Colonic mucosa (tissue), 4 donors: ENCODE measurements at regions of chr12 and their contacts with region 1.

Region 1: DNA sequence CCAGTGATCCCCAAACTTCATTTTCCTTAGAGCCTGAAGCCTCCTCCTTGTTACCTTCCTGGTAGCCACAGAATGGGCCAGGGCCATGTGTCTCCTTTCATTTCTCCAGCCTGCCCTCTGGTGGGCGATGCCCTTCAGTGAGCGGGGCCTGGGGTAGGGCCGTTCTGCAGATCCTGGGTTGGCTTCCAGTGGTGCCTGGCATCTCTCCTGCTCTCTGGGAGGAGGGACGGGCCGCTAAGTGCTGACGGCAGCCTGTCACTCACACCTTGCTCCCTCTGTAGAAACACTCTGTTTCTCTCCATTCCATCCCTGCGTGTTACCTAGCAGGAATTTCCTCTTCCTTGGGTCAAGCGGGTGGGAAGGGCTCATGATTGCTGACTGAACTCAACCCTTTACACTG is 232.1 kb downstream of the CACNA1C start:
- DNase-seq: peak; percentile 79
- H3K4me3 ChIP-seq: no peak overlapping the region
- H3K27ac ChIP-seq: no peak overlapping the region
- H3K4me1 ChIP-seq: no peaks in the 10 kb centered on the region
- H3K27me3 ChIP-seq: no peaks in the 10 kb centered on the region
- CTCF ChIP-seq: peak; percentile 57

Region 2: DNA sequence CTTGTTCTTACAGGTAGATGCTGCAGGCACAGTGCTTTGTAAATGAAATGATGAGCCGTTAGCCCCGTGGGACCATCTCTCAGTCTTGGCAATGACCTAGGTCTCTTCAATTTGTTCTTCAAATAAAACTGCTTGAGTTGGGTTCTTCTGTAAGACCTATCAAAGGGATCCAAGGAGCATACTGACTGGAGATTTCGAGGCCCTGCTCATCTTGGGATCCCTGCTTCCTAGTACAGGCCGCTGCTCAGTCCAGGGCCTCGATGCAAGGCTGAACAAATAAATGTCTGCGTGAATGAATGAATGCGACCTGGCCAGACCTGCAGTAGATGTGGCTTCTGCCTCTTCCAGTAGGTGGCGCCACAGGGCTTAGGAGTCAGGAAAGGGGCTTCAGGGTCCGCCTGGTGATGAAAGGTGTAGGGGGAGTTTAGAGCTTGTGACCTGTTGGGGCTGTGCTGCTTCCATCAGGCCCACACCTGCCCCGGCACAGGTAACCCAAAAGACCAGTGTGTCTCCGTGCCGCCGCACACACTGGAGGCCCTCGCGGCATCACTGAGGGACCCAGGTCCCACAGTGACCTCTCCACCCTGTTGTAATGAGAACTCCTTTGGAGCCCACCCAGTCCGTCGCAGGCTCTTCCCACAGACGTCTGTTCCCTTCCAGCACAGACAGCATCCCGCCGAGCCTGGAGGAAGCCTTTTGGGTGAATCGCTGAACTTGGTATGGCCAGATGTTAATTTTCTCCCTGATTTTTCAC is 227.6 kb before region 1 on chr12:
- intact Hi-C with region 1: loop called (anchors 2 kb)
- DNase-seq: peak; percentile 68
- H3K4me3 ChIP-seq: no peak overlapping the region
- H3K27ac ChIP-seq: no peak overlapping the region
- H3K4me1 ChIP-seq: no peaks in the 10 kb centered on the region
- H3K27me3 ChIP-seq: peaks cover 24% of the 10 kb centered on the region
- CTCF ChIP-seq: peak; percentile 80

Region 3: GRCh38 chr12:2583091-2583497 is 298.2 kb after region 1 on chr12:
- intact Hi-C with region 1: loop called (anchors 10 kb)
- DNase-seq: peak; percentile 75
- H3K4me3 ChIP-seq: no peak overlapping the region
- H3K27ac ChIP-seq: no peak overlapping the region
- H3K4me1 ChIP-seq: no peaks in the 10 kb centered on the region
- H3K27me3 ChIP-seq: no peaks in the 10 kb centered on the region
- CTCF ChIP-seq: peak; percentile 85